ENCODE measurements at regions of chr5 and their contacts with region 1.

Region 1: DNA sequence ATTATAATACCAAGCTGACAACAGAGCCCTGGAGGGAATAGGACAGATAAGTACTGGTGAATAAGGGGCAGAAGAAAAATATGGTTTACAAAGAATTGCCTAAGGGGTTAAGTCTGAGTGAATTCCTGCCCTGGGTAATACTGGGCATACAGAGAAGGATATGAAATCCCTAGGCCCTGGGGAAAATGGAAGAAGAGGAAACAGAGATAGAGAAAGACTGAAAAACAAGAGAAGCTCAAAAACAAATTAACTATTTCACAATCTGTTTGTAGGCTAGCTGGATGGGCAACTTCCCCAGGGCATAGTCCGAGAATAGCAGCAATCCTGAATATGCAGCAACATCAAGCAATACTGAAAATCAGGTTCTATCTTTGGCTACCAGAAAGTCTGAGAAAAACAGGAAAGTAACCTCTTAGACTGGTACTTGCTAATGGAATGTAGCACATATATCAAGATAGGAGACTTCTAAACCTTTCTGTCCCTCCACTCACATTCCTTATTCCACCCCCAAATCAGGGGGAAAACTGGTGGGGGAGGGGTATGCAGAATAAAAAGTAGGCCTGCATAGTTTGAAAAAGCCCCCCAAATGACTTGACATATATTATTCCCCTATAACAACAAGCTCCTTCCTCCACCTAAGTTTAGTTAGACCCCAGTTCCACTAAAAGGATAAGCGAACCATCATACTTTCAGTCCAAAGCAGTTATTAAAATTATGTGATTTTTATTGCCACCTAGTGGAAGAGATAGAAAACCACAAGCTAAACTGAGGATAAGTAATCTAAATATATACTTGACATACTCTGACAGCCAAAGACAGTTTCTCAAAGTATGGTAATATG is 20.6 kb downstream of the SLC38A9 start:
- ATAC-seq: peak in 4 of 8 experiments; percentile 41 to 85 (median 78)
- H3K4me3 ChIP-seq: no peak overlapping the region
- H3K27ac ChIP-seq: no peak overlapping the region
- H3K4me1 ChIP-seq: no peaks in the 10 kb centered on the region

Region 2: GRCh38 chr5:55344392-55344992 is 347.0 kb before region 1 on chr5:
- in situ Hi-C with region 1: loop called in 3 of 9 experiments (anchors 25 kb)
- ATAC-seq: peak in 2 of 8 experiments; percentile 30 to 33
- H3K4me3 ChIP-seq: no peak overlapping the region
- H3K27ac ChIP-seq: no peak overlapping the region
- H3K4me1 ChIP-seq: no peaks in the 10 kb centered on the region

Region 3: GRCh38 chr5:55407059-55407684 is 284.3 kb before region 1 on chr5:
- in situ Hi-C with region 1: loop called in 1 of 9 experiments (anchors 25 kb)
- ATAC-seq: peak in 3 of 8 experiments; percentile 73 to 77 (median 75)
- H3K4me3 ChIP-seq: no peak overlapping the region
- H3K27ac ChIP-seq: no peak overlapping the region
- H3K4me1 ChIP-seq: no peaks in the 10 kb centered on the region

Region 4: GRCh38 chr5:55509796-55510522 is 181.5 kb before region 1 on chr5:
- in situ Hi-C with region 1: no loop called
- ATAC-seq: no peak
- H3K4me3 ChIP-seq: no peak overlapping the region
- H3K27ac ChIP-seq: no peak overlapping the region
- H3K4me1 ChIP-seq: no peaks in the 10 kb centered on the region

Measured in motor neuron (in vitro differentiated cells).